GM12878 (cell line): ENCODE measurements at regions of chr2 and their contacts with region 1.

Region 1: GRCh38 chr2:120174963-120175581 is 48.1 kb downstream of the TMEM185B start:
- DNase-seq: no peak
- ATAC-seq: no peak
- H3K4me3 ChIP-seq: no peak overlapping the region
- H3K27ac ChIP-seq: no peak overlapping the region
- H3K4me1 ChIP-seq: peaks cover 28% of the 10 kb centered on the region
- H3K27me3 ChIP-seq: no peaks in the 10 kb centered on the region
- CTCF ChIP-seq: peak; percentile 64 to 74 (median 64)
- EP300 ChIP-seq: no peak
- POLR2A ChIP-seq: no peak
- RAD21 ChIP-seq: peak; percentile 82

Region 2: GRCh38 chr2:119641562-119642258 is 533.4 kb before region 1 on chr2:
- CTCF ChIA-PET with region 1: interaction called, 35 read pairs
- POLR2A ChIA-PET with region 1: no interaction called
- RAD21 ChIA-PET with region 1: interaction called, 7 read pairs
- SMC1A ChIA-PET with region 1: interaction called, 23 read pairs
- in situ Hi-C with region 1: no loop called
- intact Hi-C with region 1: loop called (anchors 5 kb)
- DNase-seq: peak; percentile 40
- ATAC-seq: peak; percentile 99
- H3K4me3 ChIP-seq: no peak overlapping the region
- H3K27ac ChIP-seq: no peak overlapping the region
- H3K4me1 ChIP-seq: no peaks in the 10 kb centered on the region
- H3K27me3 ChIP-seq: no peaks in the 10 kb centered on the region; a peak in 1 of 4 replicates
- CTCF ChIP-seq: peak; percentile 97
- EP300 ChIP-seq: no peak
- POLR2A ChIP-seq: no peak
- RAD21 ChIP-seq: peak; percentile 88

Region 3: GRCh38 chr2:119759451-119760236 is 415.4 kb before region 1 on chr2 and contains the start of gene PTPN4:
- CTCF ChIA-PET with region 1: interaction called, 144 read pairs
- POLR2A ChIA-PET with region 1: interaction called, 5 read pairs
- RAD21 ChIA-PET with region 1: interaction called, 90 read pairs
- SMC1A ChIA-PET with region 1: interaction called, 69 read pairs
- in situ Hi-C with region 1: loop called (anchors 5 kb)
- intact Hi-C with region 1: no loop called
- DNase-seq: peak; percentile 95
- ATAC-seq: peak; percentile 93
- H3K4me3 ChIP-seq: peak within 1 kb of the TSS; percentile 98
- H3K27ac ChIP-seq: peak within 1 kb of the TSS; percentile 85
- H3K4me1 ChIP-seq: no peaks in the 10 kb centered on the region
- H3K27me3 ChIP-seq: no peaks in the 10 kb centered on the region; a peak in 1 of 4 replicates
- CTCF ChIP-seq: no peak; a peak in 1 of 6 replicates
- EP300 ChIP-seq: peak in 1 of 2 experiments; percentile 21; a peak in 1 of 4 replicates
- POLR2A ChIP-seq: peak; percentile 94
- RAD21 ChIP-seq: 0 out of 2 replicates have a peak, but pooled peaks have one; percentile 3
- polyA plus RNA-seq, gene PTPN4: 5.0 to 7.4 TPM

Region 4: DNA sequence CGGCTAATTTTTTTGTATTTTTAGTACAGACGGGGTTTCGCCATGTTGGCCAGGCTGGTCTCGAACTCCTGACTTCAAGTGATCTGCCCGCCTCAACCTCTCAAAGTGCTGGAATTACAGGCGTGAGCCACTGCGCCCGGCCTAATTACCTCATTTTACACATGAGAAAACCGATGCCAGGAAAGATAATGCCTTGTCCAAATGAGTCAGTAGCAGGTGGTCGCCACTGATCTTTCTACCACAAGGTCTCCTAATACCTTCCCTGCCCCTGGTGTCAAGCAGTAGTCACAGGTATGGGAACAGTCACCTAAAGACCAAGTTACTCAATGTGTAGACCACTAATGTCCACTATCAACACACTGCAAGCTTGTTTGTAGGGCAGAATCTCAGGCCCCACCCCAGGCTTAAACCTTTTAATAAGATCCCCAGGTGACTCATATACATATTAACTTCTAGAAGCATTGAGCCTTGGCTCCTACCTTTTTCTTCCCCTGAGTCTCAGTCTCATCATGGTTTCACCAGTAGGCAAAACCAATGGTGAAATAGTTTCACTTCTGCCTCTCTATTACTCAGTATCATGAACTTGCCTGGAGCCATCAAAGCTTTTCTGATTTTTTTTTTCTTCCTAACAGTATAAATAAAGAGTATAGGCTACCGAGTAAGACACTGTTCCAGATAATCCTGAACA is 169.1 kb before region 1 on chr2:
- CTCF ChIA-PET with region 1: interaction called, 11 read pairs
- POLR2A ChIA-PET with region 1: no interaction called
- RAD21 ChIA-PET with region 1: interaction called, 3 read pairs
- SMC1A ChIA-PET with region 1: interaction called, 6 read pairs
- in situ Hi-C with region 1: no loop called
- intact Hi-C with region 1: loop called (anchors 5 kb)
- DNase-seq: peak; percentile 65
- ATAC-seq: peak; percentile 94
- H3K4me3 ChIP-seq: no peak overlapping the region
- H3K27ac ChIP-seq: peak overlapping the region; percentile 25; the same call in 1 of the 2 replicates
- H3K4me1 ChIP-seq: peaks cover 10% of the 10 kb centered on the region
- H3K27me3 ChIP-seq: no peaks in the 10 kb centered on the region
- CTCF ChIP-seq: no peak
- EP300 ChIP-seq: peak in 1 of 2 experiments; percentile 33; a peak in 1 of 4 replicates
- POLR2A ChIP-seq: no peak
- RAD21 ChIP-seq: no peak

Region 5: DNA sequence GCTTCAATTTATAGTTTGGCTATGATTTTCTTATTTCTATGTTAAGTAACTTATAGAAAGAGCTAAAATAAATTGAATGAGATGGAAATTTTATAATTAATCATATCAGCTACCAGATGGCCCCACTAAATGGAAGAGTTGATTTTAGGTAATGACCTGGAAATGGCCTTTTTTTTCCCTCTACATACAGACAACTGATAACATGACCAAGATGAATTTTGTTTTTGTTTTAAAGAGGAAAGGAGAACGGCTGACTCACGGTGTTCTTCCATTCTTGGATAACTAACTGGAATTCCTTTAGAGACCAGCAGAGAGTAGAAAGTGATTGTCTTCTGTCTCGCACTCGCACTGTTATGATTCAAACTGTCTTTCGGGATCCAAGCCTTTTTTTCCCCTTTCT is 42.9 kb before region 1 on chr2:
- CTCF ChIA-PET with region 1: interaction called, 16 read pairs
- POLR2A ChIA-PET with region 1: no interaction called
- RAD21 ChIA-PET with region 1: no interaction called
- SMC1A ChIA-PET with region 1: interaction called, 3 read pairs
- in situ Hi-C with region 1: no loop called
- intact Hi-C with region 1: no loop called
- DNase-seq: no peak
- ATAC-seq: no peak
- H3K4me3 ChIP-seq: no peak overlapping the region
- H3K27ac ChIP-seq: no peak overlapping the region
- H3K4me1 ChIP-seq: no peaks in the 10 kb centered on the region
- H3K27me3 ChIP-seq: no peaks in the 10 kb centered on the region
- CTCF ChIP-seq: no peak
- EP300 ChIP-seq: no peak
- POLR2A ChIP-seq: no peak
- RAD21 ChIP-seq: no peak

Region 6: DNA sequence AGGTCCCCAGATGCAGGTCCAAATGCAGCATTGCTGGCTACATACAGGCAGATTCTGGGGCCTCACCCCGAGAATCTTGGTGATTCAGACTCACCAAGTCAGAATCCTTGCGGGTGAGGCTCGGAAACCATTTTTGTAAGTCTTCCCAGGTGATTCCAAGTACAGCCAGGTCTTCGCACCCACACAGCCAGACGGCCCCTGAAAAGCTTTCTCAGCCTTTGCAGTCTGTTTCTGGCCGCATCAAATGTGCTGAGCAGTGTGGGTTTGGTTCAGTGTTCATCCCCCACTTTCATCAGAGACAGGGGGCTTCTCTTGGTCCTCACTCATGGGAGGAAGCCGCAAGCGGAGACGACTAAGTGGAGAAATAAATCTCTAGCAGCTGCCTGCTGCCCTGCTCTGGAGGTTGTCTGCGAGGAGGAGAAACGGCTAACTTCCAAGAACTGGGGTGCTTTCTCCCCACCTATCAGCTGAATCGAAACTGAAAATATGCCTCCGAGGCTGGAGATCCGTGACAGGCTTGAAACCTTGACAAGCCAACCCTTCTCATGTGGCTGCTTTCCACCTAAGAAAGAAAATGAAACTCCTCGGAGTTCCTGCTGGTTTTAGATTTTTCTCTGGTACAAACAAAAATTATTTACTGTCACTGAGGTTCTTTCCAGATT is 57.0 kb after region 1 on chr2:
- CTCF ChIA-PET with region 1: interaction called, 18 read pairs
- POLR2A ChIA-PET with region 1: interaction called, 4 read pairs
- RAD21 ChIA-PET with region 1: interaction called, 26 read pairs
- SMC1A ChIA-PET with region 1: interaction called, 32 read pairs
- in situ Hi-C with region 1: no loop called
- intact Hi-C with region 1: no loop called
- DNase-seq: peak; percentile 86
- ATAC-seq: peak; percentile 85
- H3K4me3 ChIP-seq: peak overlapping the region; percentile 89
- H3K27ac ChIP-seq: peak overlapping the region; percentile 97
- H3K4me1 ChIP-seq: peaks cover 18% of the 10 kb centered on the region
- H3K27me3 ChIP-seq: no peaks in the 10 kb centered on the region
- CTCF ChIP-seq: no peak
- EP300 ChIP-seq: peak in 1 of 2 experiments; percentile 37; a peak in 2 of 4 replicates
- POLR2A ChIP-seq: peak; percentile 70
- RAD21 ChIP-seq: no peak

Region 7: GRCh38 chr2:120758181-120759144 is 583.4 kb after region 1 on chr2:
- CTCF ChIA-PET with region 1: no interaction called
- POLR2A ChIA-PET with region 1: no interaction called
- RAD21 ChIA-PET with region 1: no interaction called
- SMC1A ChIA-PET with region 1: no interaction called
- in situ Hi-C with region 1: no loop called
- intact Hi-C with region 1: no loop called
- DNase-seq: no peak
- ATAC-seq: peak; percentile 41
- H3K4me3 ChIP-seq: no peak overlapping the region
- H3K27ac ChIP-seq: no peak overlapping the region
- H3K4me1 ChIP-seq: no peaks in the 10 kb centered on the region; the same call in 1 of the 2 replicates
- H3K27me3 ChIP-seq: peaks cover 0 to 4% of the 10 kb centered on the region in 2 experiments; a peak in 2 of 4 replicates
- CTCF ChIP-seq: no peak
- EP300 ChIP-seq: no peak
- POLR2A ChIP-seq: no peak
- RAD21 ChIP-seq: no peak